Posterior vena cava (tissue), 2 donors: ENCODE measurements at regions of chr17 and their contacts with region 1.

Region 1: GRCh38 chr17:33014366-33015150 is 22.9 kb downstream of the SPACA3 start:
- DNase-seq: no peak

Region 2: GRCh38 chr17:32936894-32937500 is 77.6 kb before region 1 on chr17:
- intact Hi-C with region 1: no loop called
- DNase-seq: peak; percentile 89

Region 3: GRCh38 chr17:33981711-33982601 is 967.4 kb after region 1 on chr17:
- intact Hi-C with region 1: loop called in 1 of 2 experiments (anchors 5 kb)
- DNase-seq: no peak